Aorta (tissue), 5 donors: ENCODE measurements at regions of chr10 and their contacts with region 1.

Region 1: DNA sequence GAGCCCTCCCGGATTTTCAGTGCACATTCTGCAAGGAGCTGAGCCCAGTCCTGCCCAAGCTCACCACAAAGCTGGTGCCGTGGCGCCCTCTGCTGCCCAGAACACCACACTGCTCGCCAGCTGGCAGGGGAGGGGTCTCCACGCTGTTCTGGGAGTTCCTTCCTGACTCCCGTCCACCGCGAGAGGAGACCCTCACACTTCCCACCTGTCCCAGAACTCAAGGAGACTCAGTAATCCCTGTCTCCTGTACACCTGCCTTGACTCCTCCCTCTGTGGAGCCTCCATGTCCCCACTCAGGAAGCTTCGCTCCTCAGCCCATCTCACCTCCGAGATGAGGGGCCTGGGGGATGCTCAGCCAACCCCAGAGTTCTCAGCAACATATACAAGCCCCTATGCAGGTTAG is 11.3 kb downstream of the C10orf105 start:
- DNase-seq: peak in 1 of 2 donors; percentile 88
- ATAC-seq: no peak
- H3K4me3 ChIP-seq: no peak overlapping the region
- H3K27ac ChIP-seq: no peak overlapping the region
- H3K4me1 ChIP-seq: no peaks in the 10 kb centered on the region
- H3K27me3 ChIP-seq: no peaks in the 10 kb centered on the region

Region 2: GRCh38 chr10:71319042-71319799 is 389.1 kb before region 1 on chr10 and contains the start of gene SLC29A3:
- intact Hi-C with region 1: loop called (anchors 5 kb)
- DNase-seq: peak; percentile 88 to 92
- ATAC-seq: peak; percentile 91
- H3K4me3 ChIP-seq: peak within 1 kb of the TSS; percentile 8 to 67
- H3K27ac ChIP-seq: no peak within 1 kb of the TSS
- H3K4me1 ChIP-seq: peaks cover 0 to 1% of the 10 kb centered on the region in 2 donors
- H3K27me3 ChIP-seq: no peaks in the 10 kb centered on the region
- total RNA-seq, gene SLC29A3: 5.3 to 8.8 TPM

Region 3: DNA sequence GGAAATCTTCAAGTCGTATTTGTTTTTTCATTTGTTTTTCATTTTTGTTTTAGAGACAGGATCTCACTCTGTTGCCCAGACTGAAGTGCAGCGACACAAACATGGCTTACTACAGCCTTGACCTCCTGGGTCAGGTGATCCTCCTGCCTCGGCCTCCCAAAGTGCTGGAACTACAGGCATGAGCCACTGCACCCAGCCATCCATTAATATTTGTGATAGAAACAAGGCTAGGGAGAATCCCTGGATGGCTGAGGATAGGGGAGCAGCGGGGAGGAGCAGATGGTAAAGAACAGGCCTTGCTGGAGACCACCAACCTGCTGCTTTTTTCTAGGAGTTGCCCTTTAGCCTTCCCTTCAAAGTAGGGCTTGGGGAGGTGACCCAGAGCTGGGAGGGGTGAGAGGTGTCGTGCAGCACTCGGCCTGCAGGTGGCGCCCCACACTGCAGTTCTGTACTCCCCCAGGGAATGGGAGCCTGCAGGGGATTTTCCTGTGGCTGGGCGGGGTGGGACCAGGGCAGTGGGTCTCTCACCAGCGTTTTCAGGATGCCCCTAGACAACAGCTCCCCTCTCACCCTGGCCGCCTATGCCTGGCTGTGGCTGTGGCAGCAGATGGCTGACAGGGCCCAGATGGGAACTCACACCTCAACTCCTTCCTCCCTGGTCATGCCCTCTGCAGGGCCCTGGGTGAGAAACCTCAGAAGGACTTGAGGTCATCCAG is 324.2 kb before region 1 on chr10:
- intact Hi-C with region 1: loop called (anchors 5 to 10 kb)
- DNase-seq: peak; percentile 77 to 91
- ATAC-seq: peak; percentile 86
- H3K4me3 ChIP-seq: no peak overlapping the region
- H3K27ac ChIP-seq: no peak overlapping the region
- H3K4me1 ChIP-seq: no peaks in the 10 kb centered on the region
- H3K27me3 ChIP-seq: no peaks in the 10 kb centered on the region

Region 4: GRCh38 chr10:71812016-71812912 is 104.0 kb after region 1 on chr10:
- intact Hi-C with region 1: loop called in 1 of 2 experiments (anchors 10 kb)
- DNase-seq: peak; percentile 80 to 93
- ATAC-seq: peak; percentile 84
- H3K4me3 ChIP-seq: no peak overlapping the region
- H3K27ac ChIP-seq: no peak overlapping the region
- H3K4me1 ChIP-seq: no peaks in the 10 kb centered on the region
- H3K27me3 ChIP-seq: no peaks in the 10 kb centered on the region

Region 5: GRCh38 chr10:72337020-72337629 is 628.8 kb after region 1 on chr10:
- intact Hi-C with region 1: loop called in 1 of 2 experiments (anchors 10 kb)
- DNase-seq: peak; percentile 88 to 94
- ATAC-seq: peak; percentile 66
- H3K4me3 ChIP-seq: no peak overlapping the region
- H3K27ac ChIP-seq: no peak overlapping the region
- H3K4me1 ChIP-seq: no peaks in the 10 kb centered on the region
- H3K27me3 ChIP-seq: no peaks in the 10 kb centered on the region